Mammary epithelial cell (primary cell): ENCODE measurements at regions of chr6 and their contacts with region 1.

Region 1: GRCh38 chr6:18053078-18053477 is 65.6 kb upstream of the KIF13A start:
- DNase-seq: peak; percentile 89
- H3K4me3 ChIP-seq: no peak overlapping the region
- H3K27ac ChIP-seq: peak overlapping the region; percentile 73
- H3K4me1 ChIP-seq: peaks cover 35% of the 10 kb centered on the region
- H3K27me3 ChIP-seq: no peaks in the 10 kb centered on the region
- CTCF ChIP-seq: no peak

Region 2: DNA sequence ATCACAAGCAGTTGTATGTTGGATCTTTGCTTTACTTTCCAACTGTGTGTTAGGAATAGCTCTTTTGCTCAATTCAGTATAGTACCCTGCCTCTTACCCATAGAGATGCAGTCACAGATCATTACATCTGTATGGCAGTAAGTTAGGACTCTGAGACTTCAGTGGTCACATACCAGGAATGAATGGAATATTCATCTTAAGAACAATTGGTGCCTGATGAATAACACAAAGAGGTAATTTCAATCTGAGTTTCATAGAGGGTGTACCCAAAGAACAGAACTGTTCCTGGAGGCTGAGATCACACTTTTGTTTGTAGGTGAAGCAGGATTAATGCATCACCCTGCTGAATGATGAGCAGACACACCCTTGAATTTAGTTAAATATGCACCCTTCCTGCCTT is 36.9 kb before region 1 on chr6:
- CTCF ChIA-PET with region 1: no interaction called
- dilution Hi-C with region 1: no loop called
- in situ Hi-C with region 1: loop called in 1 of 2 experiments (anchors 5 kb)
- intact Hi-C with region 1: loop called (anchors 1 kb)
- DNase-seq: peak; percentile 89
- H3K4me3 ChIP-seq: no peak overlapping the region
- H3K27ac ChIP-seq: peak overlapping the region; percentile 100
- H3K4me1 ChIP-seq: peaks cover 36% of the 10 kb centered on the region
- H3K27me3 ChIP-seq: no peaks in the 10 kb centered on the region
- CTCF ChIP-seq: no peak

Region 3: GRCh38 chr6:18022398-18023231 is 30.5 kb before region 1 on chr6:
- CTCF ChIA-PET with region 1: no interaction called
- dilution Hi-C with region 1: no loop called
- in situ Hi-C with region 1: loop called in 1 of 2 experiments (anchors 5 kb)
- intact Hi-C with region 1: no loop called
- DNase-seq: peak; percentile 58
- H3K4me3 ChIP-seq: peak overlapping the region in 2 of 3 experiments; percentile 7 to 16
- H3K27ac ChIP-seq: peak overlapping the region; percentile 71
- H3K4me1 ChIP-seq: peaks cover 37% of the 10 kb centered on the region
- H3K27me3 ChIP-seq: no peaks in the 10 kb centered on the region
- CTCF ChIP-seq: no peak